HEK293 (cell line): ENCODE measurements at regions of chr17 and their contacts with region 1.

Region 1: GRCh38 chr17:51487947-51488346 is 227.6 kb downstream of the UTP18 start:
- H3K4me3 ChIP-seq: no peak overlapping the region
- H3K27ac ChIP-seq: no peak overlapping the region
- H3K4me1 ChIP-seq: no peaks in the 10 kb centered on the region
- CTCF ChIP-seq: no peak

Region 2: GRCh38 chr17:51472670-51473205 is 15.2 kb before region 1 on chr17:
- CTCF ChIA-PET with region 1: interaction called, 10 read pairs
- POLR2A ChIA-PET with region 1: no interaction called
- H3K4me3 ChIP-seq: no peak overlapping the region
- H3K27ac ChIP-seq: no peak overlapping the region
- H3K4me1 ChIP-seq: no peaks in the 10 kb centered on the region
- CTCF ChIP-seq: no peak

Region 3: GRCh38 chr17:51505450-51505849 is 17.5 kb after region 1 on chr17:
- CTCF ChIA-PET with region 1: interaction called, 22 read pairs
- POLR2A ChIA-PET with region 1: no interaction called
- H3K4me3 ChIP-seq: no peak overlapping the region
- H3K27ac ChIP-seq: no peak overlapping the region
- H3K4me1 ChIP-seq: no peaks in the 10 kb centered on the region
- CTCF ChIP-seq: no peak